AG04449 (cell line): ENCODE measurements at regions of chr19 and their contacts with region 1.

Region 1: GRCh38 chr19:48321622-48322591 is 3.4 kb upstream of the EMP3 start:
- DNase-seq: peak; percentile 86
- H3K4me3 ChIP-seq: peak overlapping the region; percentile 67
- CTCF ChIP-seq: no peak

Region 2: GRCh38 chr19:48308631-48309586 is 13.0 kb before region 1 on chr19:
- CTCF ChIA-PET with region 1: interaction called, 27 read pairs
- POLR2A ChIA-PET with region 1: interaction called, 3 read pairs
- DNase-seq: no peak
- H3K4me3 ChIP-seq: no peak overlapping the region
- CTCF ChIP-seq: peak; percentile 64